Transverse colon (tissue), 4 donors: ENCODE measurements at regions of chr11 and their contacts with region 1.

Region 1: GRCh38 chr11:111982019-111982464 is 43.2 kb upstream of the DLAT start:
- DNase-seq: peak; percentile 87
- H3K4me3 ChIP-seq: peak overlapping the region in 3 of 4 donors; percentile 23 to 46 (median 23)
- H3K27ac ChIP-seq: peak overlapping the region; percentile 77 to 87 (median 82)
- H3K4me1 ChIP-seq: peaks cover 8 to 62% (median 30%) of the 10 kb centered on the region in 4 donors
- H3K27me3 ChIP-seq: no peaks in the 10 kb centered on the region
- CTCF ChIP-seq: peak; percentile 63 to 87 (median 68)
- EP300 ChIP-seq: no peak
- POLR2A ChIP-seq: peak; percentile 56

Region 2: GRCh38 chr11:111926505-111927391 is 55.3 kb before region 1 on chr11:
- in situ Hi-C with region 1: loop called in 3 of 4 experiments (anchors 10 kb)
- intact Hi-C with region 1: no loop called
- DNase-seq: peak; percentile 97
- H3K4me3 ChIP-seq: peak overlapping the region; percentile 13 to 47 (median 24)
- H3K27ac ChIP-seq: peak overlapping the region; percentile 87 to 93 (median 90)
- H3K4me1 ChIP-seq: peaks cover 12 to 41% (median 28%) of the 10 kb centered on the region in 4 donors
- H3K27me3 ChIP-seq: no peaks in the 10 kb centered on the region
- CTCF ChIP-seq: peak in 3 of 5 experiments; percentile 8 to 41 (median 37)
- EP300 ChIP-seq: no peak
- POLR2A ChIP-seq: peak; percentile 56

Region 3: DNA sequence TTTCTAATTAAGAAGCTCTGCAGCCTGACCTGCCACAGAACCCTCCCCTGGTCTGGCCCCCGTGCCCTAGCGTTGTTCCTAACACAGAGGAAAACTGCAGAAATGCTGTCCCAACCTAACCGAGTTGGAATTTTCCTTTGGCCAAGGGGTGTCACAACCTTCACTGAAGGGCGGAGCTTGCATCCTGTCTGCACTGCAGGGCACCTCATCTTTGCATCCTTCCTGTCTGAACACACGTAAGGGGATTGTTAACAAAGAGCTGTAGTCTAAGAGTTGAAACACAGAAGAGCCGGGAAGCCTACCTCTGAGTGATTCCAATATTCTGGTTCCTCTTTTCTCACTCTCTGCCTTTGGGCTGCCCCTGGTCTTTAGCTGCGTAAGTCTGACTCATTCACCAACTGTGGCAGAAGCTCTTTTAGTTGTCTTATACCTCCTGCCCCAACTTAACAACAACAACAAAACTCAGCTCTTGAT is 43.3 kb before region 1 on chr11:
- in situ Hi-C with region 1: loop called in 1 of 4 experiments (anchors 10 kb)
- intact Hi-C with region 1: loop called (anchors 5 kb)
- DNase-seq: no peak
- H3K4me3 ChIP-seq: peak overlapping the region in 1 of 4 donors; percentile 1
- H3K27ac ChIP-seq: peak overlapping the region; percentile 78 to 90 (median 83)
- H3K4me1 ChIP-seq: peaks cover 10 to 43% (median 29%) of the 10 kb centered on the region in 4 donors
- H3K27me3 ChIP-seq: no peaks in the 10 kb centered on the region
- CTCF ChIP-seq: no peak
- EP300 ChIP-seq: no peak
- POLR2A ChIP-seq: no peak

Region 4: DNA sequence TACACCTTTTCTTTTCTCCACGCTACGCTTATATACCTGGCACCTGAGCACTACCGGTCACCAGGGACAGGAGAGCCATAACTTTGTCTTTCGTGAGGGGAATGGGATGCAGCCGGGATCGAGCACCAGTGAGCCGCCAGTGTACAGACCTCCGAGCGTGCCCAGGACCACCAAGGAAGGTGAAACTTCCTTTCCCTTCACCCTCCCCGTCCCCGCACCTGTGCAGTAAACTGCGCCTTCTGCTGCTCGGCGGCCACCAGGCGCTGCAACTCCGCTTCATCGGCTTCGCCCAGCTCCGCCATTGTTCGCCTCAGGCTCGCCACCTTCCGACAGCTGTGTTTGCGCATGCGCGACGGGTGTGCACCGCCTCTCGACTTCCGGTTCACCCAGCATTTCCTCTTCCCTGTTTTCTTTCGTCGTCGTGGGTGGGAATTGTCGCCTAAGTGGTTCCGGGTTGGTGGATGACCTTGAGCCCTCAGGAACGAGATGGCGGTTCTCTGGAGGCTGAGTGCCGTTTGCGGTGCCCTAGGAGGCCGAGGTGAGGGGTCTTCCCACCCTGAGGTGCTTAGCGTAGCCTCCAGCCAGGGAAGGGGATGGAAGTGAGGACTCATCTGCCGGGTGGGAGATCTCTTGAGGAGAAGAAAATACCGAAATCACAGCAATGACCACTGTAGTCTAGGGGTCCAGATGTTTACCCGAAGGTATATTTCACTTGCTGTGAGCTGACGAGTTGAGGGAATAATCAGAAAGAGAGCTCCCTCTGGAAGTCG is 104.6 kb after region 1 on chr11 and contains the starts of genes SDHD and TIMM8B:
- in situ Hi-C with region 1: no loop called
- intact Hi-C with region 1: no loop called
- DNase-seq: peak; percentile 96
- H3K4me3 ChIP-seq: peak within 1 kb of the TSS; percentile 65 to 83 (median 74)
- H3K27ac ChIP-seq: peak within 1 kb of the TSS; percentile 80 to 84 (median 84)
- H3K4me1 ChIP-seq: peaks cover 22 to 36% (median 24%) of the 10 kb centered on the region in 4 donors
- H3K27me3 ChIP-seq: no peaks in the 10 kb centered on the region
- CTCF ChIP-seq: peak in 4 of 5 experiments; percentile 22 to 68 (median 36)
- EP300 ChIP-seq: no peak
- POLR2A ChIP-seq: peak; percentile 79
- total RNA-seq, gene SDHD: 30.3 to 268 (median 145) TPM
- total RNA-seq, gene TIMM8B: 26.2 to 58.9 (median 40.6) TPM